ENCODE measurements at regions of chr4 and their contacts with region 1.

Region 1: GRCh38 chr4:36399762-36400353 is 118.4 kb downstream of the DTHD1 start:
- DNase-seq: peak; percentile 14
- H3K4me3 ChIP-seq: no peak overlapping the region
- H3K27ac ChIP-seq: no peak overlapping the region
- H3K4me1 ChIP-seq: no peaks in the 10 kb centered on the region
- H3K27me3 ChIP-seq: no peaks in the 10 kb centered on the region

Region 2: DNA sequence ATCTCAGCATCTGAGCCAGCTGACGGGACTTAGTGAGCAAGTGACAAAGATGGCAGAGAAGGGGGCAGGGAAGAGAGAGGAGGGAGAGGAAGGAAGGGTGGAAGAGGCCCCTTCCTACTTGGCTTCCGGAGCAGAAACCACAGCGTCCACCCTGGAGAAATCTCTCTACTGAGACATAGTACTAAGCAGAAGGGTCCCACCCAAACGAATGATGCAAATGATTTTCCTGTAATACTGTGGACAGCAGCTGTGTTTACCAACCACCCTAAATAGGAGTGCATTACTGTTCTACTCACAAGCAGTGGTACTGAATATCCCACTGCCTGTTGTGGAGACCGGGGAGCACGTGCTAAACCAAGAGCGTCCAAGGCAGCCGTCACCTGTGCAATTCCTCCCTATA is 89.1 kb before region 1 on chr4:
- in situ Hi-C with region 1: loop called (anchors 25 kb)
- DNase-seq: no peak
- H3K4me3 ChIP-seq: no peak overlapping the region
- H3K27ac ChIP-seq: no peak overlapping the region
- H3K4me1 ChIP-seq: no peaks in the 10 kb centered on the region
- H3K27me3 ChIP-seq: no peaks in the 10 kb centered on the region